WTC11 (cell line): ENCODE measurements at regions of chr2 and their contacts with region 1.

Region 1: GRCh38 chr2:241609859-241610793 is 26.8 kb downstream of the THAP4 start:
- DNase-seq: peak; percentile 97
- ATAC-seq: peak; percentile 99
- H3K4me3 Mint-ChIP-seq: peak overlapping the region; percentile 81
- H3K27ac Mint-ChIP-seq: peak overlapping the region; percentile 94
- H3K4me1 Mint-ChIP-seq: peaks cover 13% of the 10 kb centered on the region
- H3K27me3 Mint-ChIP-seq: no peaks in the 10 kb centered on the region
- CTCF ChIP-seq: peak; percentile 54

Region 2: DNA sequence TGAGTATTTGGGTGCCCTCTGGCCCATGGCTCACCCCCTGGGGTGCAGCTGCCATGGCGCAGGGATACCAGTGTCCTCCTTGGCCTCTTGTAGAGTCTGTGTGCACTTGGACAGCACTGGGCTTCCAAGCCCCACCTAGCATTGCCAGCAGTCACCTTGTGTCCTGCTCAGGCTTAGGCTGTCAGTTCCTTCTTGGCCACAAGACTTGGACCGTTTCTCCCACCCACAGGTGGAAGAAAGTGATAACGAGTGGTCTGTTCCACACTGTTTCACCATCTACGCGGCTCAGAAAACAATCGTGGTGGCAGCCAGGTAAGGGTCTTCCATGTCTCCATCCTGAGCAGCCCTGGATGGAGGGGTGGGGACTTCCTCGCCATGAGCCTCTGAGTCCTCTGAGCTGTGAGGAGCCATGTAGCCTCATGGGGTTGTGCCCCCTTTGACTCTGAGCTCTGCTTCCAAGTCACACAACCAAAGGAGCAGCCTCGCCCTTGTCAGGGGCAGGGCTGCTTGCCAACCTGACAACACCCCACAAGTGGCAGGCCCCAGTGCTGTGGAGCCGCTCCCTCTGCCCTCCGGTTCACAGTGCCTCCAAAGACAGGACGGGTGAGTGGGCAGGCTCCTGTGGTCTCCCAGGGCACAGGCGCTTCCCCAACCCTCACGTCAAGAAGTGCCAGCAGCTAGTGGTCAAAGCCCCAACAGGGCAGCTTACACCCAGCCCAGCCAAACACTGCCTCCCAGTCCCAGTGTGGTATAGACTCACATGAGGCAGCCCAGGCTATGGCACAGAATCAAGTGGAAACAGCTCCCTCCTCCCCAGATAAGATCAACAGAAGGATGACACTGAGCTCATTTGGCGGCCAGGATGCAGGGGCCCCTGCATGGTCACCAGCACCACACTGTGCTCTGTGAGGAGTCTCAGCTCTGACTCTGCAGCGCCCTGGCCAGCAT is 120.1 kb before region 1 on chr2:
- CTCF ChIA-PET with region 1: no interaction called
- POLR2A ChIA-PET with region 1: no interaction called
- DNase-seq: no peak
- ATAC-seq: no peak
- H3K4me3 Mint-ChIP-seq: no peak overlapping the region
- H3K27ac Mint-ChIP-seq: peak overlapping the region; percentile 5; the same call in 1 of the 2 replicates
- H3K4me1 Mint-ChIP-seq: peaks cover 2% of the 10 kb centered on the region; the same call in 1 of the 2 replicates
- H3K27me3 Mint-ChIP-seq: no peaks in the 10 kb centered on the region
- CTCF ChIP-seq: no peak

Region 3: DNA sequence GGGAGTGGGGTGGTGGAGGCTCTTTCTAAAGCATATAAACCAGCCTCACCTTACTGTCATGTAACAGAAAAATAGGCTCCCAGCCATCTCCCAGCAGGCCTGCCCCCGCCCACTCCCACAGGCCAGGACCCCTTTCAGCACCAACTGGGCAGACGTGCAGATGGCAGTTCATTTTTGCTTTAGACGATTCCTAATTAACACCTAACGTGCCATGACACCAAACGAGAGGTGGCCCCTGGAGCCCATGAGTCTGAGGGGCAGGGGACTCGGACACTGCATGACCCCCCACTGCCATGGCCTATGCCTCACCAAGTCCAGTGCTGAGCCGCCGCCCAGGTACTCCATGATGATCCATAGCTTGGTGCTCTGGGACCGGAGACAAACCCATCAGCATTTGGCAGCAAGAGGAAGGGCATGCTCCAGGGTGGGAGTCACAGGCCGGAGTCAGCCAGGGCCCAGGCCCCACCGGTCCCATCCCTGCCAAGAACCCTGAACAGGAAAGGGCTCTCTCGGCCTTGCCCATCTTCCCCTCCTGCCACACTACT is 109.6 kb before region 1 on chr2:
- CTCF ChIA-PET with region 1: no interaction called
- POLR2A ChIA-PET with region 1: no interaction called
- DNase-seq: no peak
- ATAC-seq: no peak
- H3K4me3 Mint-ChIP-seq: no peak overlapping the region
- H3K27ac Mint-ChIP-seq: no peak overlapping the region; the same call in 1 of the 2 replicates
- H3K4me1 Mint-ChIP-seq: peaks cover 3% of the 10 kb centered on the region; the same call in 1 of the 2 replicates
- H3K27me3 Mint-ChIP-seq: no peaks in the 10 kb centered on the region
- CTCF ChIP-seq: no peak

Region 4: GRCh38 chr2:241598480-241598879 is 11.6 kb before region 1 on chr2:
- CTCF ChIA-PET with region 1: interaction called, 11 read pairs
- POLR2A ChIA-PET with region 1: no interaction called
- DNase-seq: peak; percentile 35
- ATAC-seq: peak; percentile 46
- H3K4me3 Mint-ChIP-seq: no peak overlapping the region
- H3K27ac Mint-ChIP-seq: no peak overlapping the region
- H3K4me1 Mint-ChIP-seq: no peaks in the 10 kb centered on the region
- H3K27me3 Mint-ChIP-seq: no peaks in the 10 kb centered on the region
- CTCF ChIP-seq: no peak

Region 5: DNA sequence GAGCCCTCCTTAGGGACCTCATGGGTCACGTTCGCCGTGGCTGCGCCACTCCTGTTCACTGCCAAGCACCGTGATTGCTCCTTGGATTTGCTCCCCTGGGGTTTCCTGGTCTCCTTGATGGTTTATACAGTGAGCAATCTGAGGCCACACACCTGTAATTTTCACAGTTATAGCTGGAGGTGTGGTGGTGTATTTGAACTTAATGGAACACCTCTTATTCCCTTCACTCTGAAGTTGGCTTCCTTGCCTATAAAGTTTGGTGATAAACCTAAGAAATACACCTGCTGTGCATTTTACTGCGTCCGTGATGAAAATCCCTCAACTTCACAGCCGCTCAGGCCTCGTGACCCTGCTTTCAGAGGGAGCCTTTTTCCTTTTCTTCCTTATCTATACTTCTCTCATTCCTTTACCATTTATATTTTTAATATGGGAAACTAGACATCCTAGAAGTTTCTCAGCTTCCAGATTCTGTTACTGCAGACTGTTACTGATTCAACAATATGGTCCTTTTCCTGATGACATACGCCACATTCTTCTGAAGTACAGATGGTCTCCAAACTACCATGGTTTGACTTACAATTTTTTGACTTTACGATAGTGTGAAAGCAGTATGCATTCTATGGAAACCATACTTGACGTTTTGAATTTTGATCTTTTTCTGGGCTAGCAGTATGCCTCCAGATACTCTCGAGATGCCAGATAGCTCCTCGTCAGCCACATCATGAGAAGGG is 36.0 kb after region 1 on chr2:
- CTCF ChIA-PET with region 1: interaction called, 10 read pairs
- POLR2A ChIA-PET with region 1: no interaction called
- DNase-seq: no peak
- ATAC-seq: no peak
- H3K4me3 Mint-ChIP-seq: no peak overlapping the region
- H3K27ac Mint-ChIP-seq: peak overlapping the region; percentile 29; the same call in 1 of the 2 replicates
- H3K4me1 Mint-ChIP-seq: peaks cover 32% of the 10 kb centered on the region
- H3K27me3 Mint-ChIP-seq: no peaks in the 10 kb centered on the region
- CTCF ChIP-seq: no peak